ENCODE measurements at regions of chr1 and their contacts with region 1.

Region 1: GRCh38 chr1:31931593-31932225 is 6.5 kb downstream of the PTP4A2 start:
- DNase-seq: no peak
- ATAC-seq: no peak
- H3K4me3 ChIP-seq: peak overlapping the region in 1 of 4 donors; percentile 6
- H3K27ac ChIP-seq: peak overlapping the region; percentile 97 to 99 (median 98)
- H3K4me1 ChIP-seq: peaks cover 92 to 97% of the 10 kb centered on the region in 2 donors
- H3K27me3 ChIP-seq: no peaks in the 10 kb centered on the region
- CTCF ChIP-seq: no peak
- POLR2A ChIP-seq: no peak

Region 2: GRCh38 chr1:31644560-31645273 is 287.0 kb before region 1 on chr1 and contains the start of gene PEF1:
- in situ Hi-C with region 1: no loop called
- intact Hi-C with region 1: loop called (anchors 5 kb)
- DNase-seq: peak; percentile 98 to 99
- ATAC-seq: peak; percentile 87 to 90
- H3K4me3 ChIP-seq: peak within 1 kb of the TSS; percentile 72 to 96 (median 79)
- H3K27ac ChIP-seq: peak within 1 kb of the TSS; percentile 87 to 99 (median 96)
- H3K4me1 ChIP-seq: peaks cover 48 to 54% of the 10 kb centered on the region in 2 donors
- H3K27me3 ChIP-seq: no peaks in the 10 kb centered on the region
- CTCF ChIP-seq: peak in 2 of 5 experiments; percentile 26 to 35
- POLR2A ChIP-seq: peak; percentile 77 to 80
- total RNA-seq, gene PEF1: 29.5 to 53.1 (median 42.7) TPM

Measured in gastrocnemius medialis (tissue), 4 donors.